Vagina (tissue), 2 donors: ENCODE measurements at regions of chrX and their contacts with region 1.

Region 1: DNA sequence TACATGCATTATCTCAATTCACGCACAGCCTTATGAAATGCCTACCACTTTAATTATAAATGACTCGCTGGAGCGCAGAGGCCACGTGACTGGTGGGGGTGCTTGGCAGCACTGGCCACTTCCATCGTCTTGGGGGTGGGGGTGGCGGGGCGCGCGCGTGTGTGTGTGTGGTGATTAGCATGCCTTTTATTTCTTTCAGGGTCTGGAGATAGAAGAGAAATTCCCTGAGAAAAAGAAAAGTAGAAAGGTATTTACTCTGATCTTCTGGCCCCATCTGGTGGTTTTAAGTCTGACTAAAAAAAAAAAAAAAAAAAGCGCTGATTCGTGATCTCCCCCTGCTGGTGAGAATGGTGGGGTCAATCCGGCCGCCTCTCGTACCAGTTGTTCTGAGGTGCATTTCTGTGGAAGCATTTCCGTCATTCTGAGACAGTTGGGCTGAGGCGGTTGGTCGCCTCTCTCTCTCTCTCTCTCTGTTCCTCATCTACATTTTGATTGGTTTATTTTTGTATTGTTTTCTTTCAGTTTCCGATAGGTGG is at the start of gene CCNB3:
- DNase-seq: no peak
- H3K4me3 ChIP-seq: peak within 1 kb of the TSS in 1 of 2 donors; percentile 25
- H3K27ac ChIP-seq: peak within 1 kb of the TSS; percentile 15
- H3K4me1 ChIP-seq: no peaks in the 10 kb centered on the region
- H3K27me3 ChIP-seq: no peaks in the 10 kb centered on the region
- CTCF ChIP-seq: peak in 2 of 3 experiments; percentile 39 to 57
- POLR2A ChIP-seq: no peak
- total RNA-seq, gene CCNB3: 0.25 TPM

Region 2: GRCh38 chrX:49915361-49916222 is 288.8 kb before region 1 on chrX:
- intact Hi-C with region 1: loop called (anchors 5 kb)
- DNase-seq: no peak
- H3K4me3 ChIP-seq: no peak overlapping the region
- H3K27ac ChIP-seq: no peak overlapping the region
- H3K4me1 ChIP-seq: no peaks in the 10 kb centered on the region
- H3K27me3 ChIP-seq: no peaks in the 10 kb centered on the region
- CTCF ChIP-seq: peak; percentile 57 to 83 (median 61)
- POLR2A ChIP-seq: no peak

Region 3: DNA sequence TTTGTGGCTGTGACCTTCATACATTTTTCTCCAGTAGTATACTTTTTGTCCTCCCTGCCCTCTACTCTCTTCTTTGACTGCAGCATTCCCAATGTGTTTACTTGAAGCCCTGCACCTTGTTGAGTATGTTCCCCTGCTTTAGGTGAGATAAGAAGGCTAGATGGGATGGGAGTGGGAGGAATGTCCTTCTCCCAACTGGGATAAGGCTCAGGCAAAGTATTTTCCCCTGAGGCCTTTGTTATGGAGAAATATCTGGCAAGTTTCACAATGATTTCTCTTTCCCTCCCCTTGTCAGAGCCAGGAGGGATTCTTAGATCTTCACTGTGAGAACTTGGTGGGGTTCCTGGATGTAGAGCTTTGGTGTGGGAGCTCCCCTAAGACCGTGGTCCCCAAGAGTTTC is 150.3 kb before region 1 on chrX:
- intact Hi-C with region 1: no loop called
- DNase-seq: no peak
- H3K4me3 ChIP-seq: no peak overlapping the region
- H3K27ac ChIP-seq: no peak overlapping the region
- H3K4me1 ChIP-seq: no peaks in the 10 kb centered on the region
- H3K27me3 ChIP-seq: no peaks in the 10 kb centered on the region
- CTCF ChIP-seq: no peak
- POLR2A ChIP-seq: no peak